HAP-1 (cell line): ENCODE measurements at regions of chr16 and their contacts with region 1.

Region 1: DNA sequence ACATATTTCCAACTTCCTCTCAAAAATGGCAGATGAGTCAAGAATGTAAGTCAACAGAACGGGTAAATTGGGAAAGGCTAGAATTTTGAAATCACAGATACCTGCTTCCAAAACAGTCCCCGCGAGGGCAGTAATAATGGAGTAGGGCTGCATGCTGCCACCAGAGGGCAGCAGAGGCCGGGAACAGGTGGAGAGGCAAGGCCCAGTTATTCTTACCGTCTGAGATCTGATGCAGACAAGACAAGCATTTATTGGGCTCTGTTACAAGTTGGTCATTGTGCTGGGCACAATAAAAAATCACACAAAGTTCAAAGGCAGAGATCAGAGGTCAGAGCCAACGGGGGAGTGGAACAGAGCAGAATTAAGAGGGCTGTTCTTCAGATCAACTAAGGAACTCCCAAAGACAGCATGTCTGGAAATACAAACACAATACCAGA is 8.8 kb upstream of the MLKL start:
- DNase-seq: peak; percentile 78 to 90
- H3K4me3 ChIP-seq: no peak overlapping the region
- H3K4me1 ChIP-seq: peaks cover 4% of the 10 kb centered on the region
- H3K27me3 ChIP-seq: no peaks in the 10 kb centered on the region

Region 2: GRCh38 chr16:74862741-74863244 is 153.3 kb after region 1 on chr16:
- in situ Hi-C with region 1: loop called (anchors 5 kb)
- DNase-seq: peak; percentile 44 to 68
- H3K4me3 ChIP-seq: no peak overlapping the region
- H3K4me1 ChIP-seq: peaks cover 11% of the 10 kb centered on the region; the same call in 1 of the 2 replicates
- H3K27me3 ChIP-seq: no peaks in the 10 kb centered on the region